AG04450 (cell line): ENCODE measurements at regions of chr6 and their contacts with region 1.

Region 1: GRCh38 chr6:43506667-43507471 is 3.3 kb downstream of the LRRC73 start:
- DNase-seq: peak; percentile 53
- H3K4me3 ChIP-seq: no peak overlapping the region
- H3K27ac ChIP-seq: no peak overlapping the region
- H3K27me3 ChIP-seq: no peaks in the 10 kb centered on the region
- CTCF ChIP-seq: peak; percentile 97

Region 2: GRCh38 chr6:42148058-42148457 is 1358.8 kb before region 1 on chr6:
- CTCF ChIA-PET with region 1: interaction called, 10 read pairs
- POLR2A ChIA-PET with region 1: no interaction called
- DNase-seq: no peak
- H3K4me3 ChIP-seq: no peak overlapping the region
- H3K27ac ChIP-seq: no peak overlapping the region
- H3K27me3 ChIP-seq: no peaks in the 10 kb centered on the region
- CTCF ChIP-seq: no peak

Region 3: DNA sequence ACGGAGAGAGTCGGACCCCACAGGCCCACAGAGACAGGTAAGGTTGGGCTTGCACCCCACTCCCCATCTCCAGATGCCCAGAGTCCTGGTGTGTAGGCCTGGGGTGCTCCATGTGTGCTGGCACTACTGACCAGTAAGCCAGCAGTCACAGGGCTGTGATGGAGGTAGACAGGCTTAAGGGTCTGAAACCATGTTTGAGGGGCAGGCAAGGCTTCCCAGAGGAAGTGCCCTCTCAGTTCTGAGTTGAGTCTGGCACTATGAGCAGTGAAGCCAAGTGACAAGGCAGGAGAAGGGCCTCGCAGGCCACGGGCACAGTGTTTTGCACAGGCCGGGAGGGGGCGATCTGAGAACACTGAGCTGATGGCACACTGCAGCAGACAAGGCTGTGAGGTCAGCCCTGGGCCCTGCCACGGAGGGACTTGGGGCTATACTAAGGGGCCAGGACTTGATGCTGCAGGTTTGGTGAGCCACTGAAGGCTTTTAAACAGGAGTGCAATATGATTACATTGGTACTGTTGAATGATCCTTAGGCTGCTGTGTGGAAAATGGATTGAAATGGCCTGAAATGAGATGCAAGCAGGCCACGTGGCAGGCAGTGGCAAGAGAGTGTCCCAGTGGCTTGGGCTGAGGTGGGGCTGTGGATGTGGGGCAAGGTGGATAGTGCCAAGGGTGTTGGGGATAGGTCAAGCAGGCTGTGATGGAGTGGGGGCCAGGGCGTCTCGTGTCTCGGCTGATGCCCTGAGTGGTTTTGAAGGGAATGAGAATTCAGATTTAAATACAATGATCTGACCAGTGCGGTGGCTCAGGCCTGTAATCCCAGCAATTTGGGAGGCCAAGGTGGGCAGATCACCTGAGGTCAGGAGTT is 243.3 kb before region 1 on chr6:
- CTCF ChIA-PET with region 1: interaction called, 15 read pairs
- POLR2A ChIA-PET with region 1: no interaction called
- DNase-seq: peak; percentile 15
- H3K4me3 ChIP-seq: no peak overlapping the region
- H3K27ac ChIP-seq: no peak overlapping the region
- H3K27me3 ChIP-seq: peaks cover 22% of the 10 kb centered on the region
- CTCF ChIP-seq: peak; percentile 76

Region 4: GRCh38 chr6:43454696-43455530 is 52.0 kb before region 1 on chr6:
- CTCF ChIA-PET with region 1: interaction called, 53 read pairs
- POLR2A ChIA-PET with region 1: interaction called, 5 read pairs
- DNase-seq: peak; percentile 69
- H3K4me3 ChIP-seq: peak overlapping the region; percentile 60
- H3K27ac ChIP-seq: no peak overlapping the region
- H3K27me3 ChIP-seq: peaks cover 3% of the 10 kb centered on the region
- CTCF ChIP-seq: no peak

Region 5: DNA sequence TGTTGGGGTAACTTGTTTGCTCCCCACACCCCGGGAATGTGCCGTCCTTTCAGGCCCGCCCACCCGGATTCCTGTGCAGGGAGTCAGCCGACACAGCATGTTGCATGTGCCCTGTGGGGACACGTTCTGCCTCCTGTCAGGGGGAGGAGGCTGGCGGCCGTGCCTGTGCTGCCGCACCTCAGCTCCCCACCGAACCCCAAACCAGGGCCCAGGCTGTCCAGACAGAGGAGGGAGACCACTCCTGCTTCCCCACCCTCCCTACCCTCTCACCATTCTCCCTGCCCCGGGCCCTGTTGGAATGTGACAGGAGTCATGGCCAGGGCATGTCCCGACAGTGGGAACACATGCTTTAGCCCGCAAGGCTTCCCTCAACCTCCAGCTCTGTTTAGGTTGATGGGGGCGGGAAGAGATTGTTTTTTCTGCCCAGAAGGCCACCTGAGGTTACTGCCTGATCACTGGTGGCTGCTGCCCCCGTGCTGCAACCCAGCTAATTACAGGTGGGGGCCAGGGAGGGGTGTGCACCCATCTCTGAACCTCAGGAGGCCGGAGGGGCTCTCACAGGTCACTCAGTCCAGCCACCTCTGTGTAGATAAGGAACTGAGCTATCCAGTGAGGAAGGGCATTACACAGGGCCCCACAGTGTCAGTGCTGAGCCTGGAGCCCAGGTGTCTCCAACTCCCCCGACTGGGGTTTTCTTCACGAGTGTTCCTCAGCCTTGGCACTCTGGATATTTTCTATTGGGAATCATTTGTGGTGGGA is 10.3 kb before region 1 on chr6:
- CTCF ChIA-PET with region 1: interaction called, 54 read pairs
- POLR2A ChIA-PET with region 1: interaction called, 8 read pairs
- DNase-seq: no peak
- H3K4me3 ChIP-seq: no peak overlapping the region
- H3K27ac ChIP-seq: peak overlapping the region; percentile 68
- H3K27me3 ChIP-seq: no peaks in the 10 kb centered on the region
- CTCF ChIP-seq: peak; percentile 65

Region 6: DNA sequence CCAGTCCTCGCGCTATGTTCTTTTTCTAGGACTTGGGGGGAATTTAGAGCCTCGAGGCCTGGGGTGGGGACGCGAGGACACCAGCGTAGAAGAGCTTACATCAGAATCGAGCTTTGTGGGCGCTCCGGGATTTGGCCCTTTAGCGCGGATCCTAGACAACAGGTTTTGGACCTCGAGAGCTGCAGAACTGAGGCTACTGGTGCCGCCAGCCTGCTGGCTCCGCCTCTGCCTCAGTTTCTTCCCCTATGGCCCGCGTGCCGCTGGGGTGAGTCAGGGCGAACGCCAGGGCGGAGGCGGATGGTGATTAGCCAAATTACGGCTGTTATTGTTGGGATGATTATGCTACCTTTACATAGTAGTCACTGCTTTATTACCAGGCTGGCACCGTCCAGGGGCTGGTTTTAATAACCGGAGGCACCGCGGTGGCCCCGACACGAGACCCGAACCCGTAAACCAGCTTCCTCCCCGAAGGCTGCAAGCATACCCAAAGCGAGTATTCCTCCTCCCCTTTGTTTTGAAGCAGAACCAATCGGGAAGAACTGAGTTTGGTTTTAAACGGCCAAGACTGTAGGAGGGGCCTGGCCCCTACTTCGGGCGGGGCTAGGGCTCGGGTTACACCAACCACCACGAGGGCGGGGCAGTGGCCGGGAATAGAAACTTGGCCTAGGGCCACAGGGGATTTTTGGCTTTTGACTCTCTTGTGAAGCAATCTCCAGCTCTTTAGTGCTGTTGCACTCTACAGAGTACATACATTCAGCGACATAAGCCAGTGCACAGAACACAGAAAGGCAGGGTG is 122.8 kb after region 1 on chr6:
- CTCF ChIA-PET with region 1: no interaction called
- POLR2A ChIA-PET with region 1: no interaction called
- DNase-seq: peak; percentile 94
- H3K4me3 ChIP-seq: peak overlapping the region; percentile 84
- H3K27ac ChIP-seq: peak overlapping the region; percentile 96
- H3K27me3 ChIP-seq: no peaks in the 10 kb centered on the region
- CTCF ChIP-seq: no peak

Region 7: GRCh38 chr6:43790025-43790523 is 283.2 kb after region 1 on chr6:
- CTCF ChIA-PET with region 1: no interaction called
- POLR2A ChIA-PET with region 1: no interaction called
- DNase-seq: no peak
- H3K4me3 ChIP-seq: no peak overlapping the region
- H3K27ac ChIP-seq: no peak overlapping the region
- H3K27me3 ChIP-seq: no peaks in the 10 kb centered on the region
- CTCF ChIP-seq: no peak